AG04450 (cell line): ENCODE measurements at regions of chr17 and their contacts with region 1.

Region 1: GRCh38 chr17:63425482-63425881 is 20.6 kb downstream of the CYB561 start:
- DNase-seq: peak; percentile 68
- H3K4me3 ChIP-seq: no peak overlapping the region
- H3K27ac ChIP-seq: no peak overlapping the region
- H3K27me3 ChIP-seq: no peaks in the 10 kb centered on the region
- CTCF ChIP-seq: peak; percentile 98

Region 2: GRCh38 chr17:63478791-63479494 is 53.5 kb after region 1 on chr17:
- CTCF ChIA-PET with region 1: interaction called, 48 read pairs
- POLR2A ChIA-PET with region 1: no interaction called
- DNase-seq: peak; percentile 74
- H3K4me3 ChIP-seq: no peak overlapping the region
- H3K27ac ChIP-seq: no peak overlapping the region
- H3K27me3 ChIP-seq: peaks cover 10% of the 10 kb centered on the region
- CTCF ChIP-seq: peak; percentile 88

Region 3: GRCh38 chr17:63571763-63572271 is 146.3 kb after region 1 on chr17:
- CTCF ChIA-PET with region 1: interaction called, 16 read pairs
- POLR2A ChIA-PET with region 1: no interaction called
- DNase-seq: peak; percentile 44
- H3K4me3 ChIP-seq: no peak overlapping the region
- H3K27ac ChIP-seq: no peak overlapping the region
- H3K27me3 ChIP-seq: no peaks in the 10 kb centered on the region
- CTCF ChIP-seq: no peak

Region 4: GRCh38 chr17:63621766-63622519 is 196.5 kb after region 1 on chr17 and contains the start of gene MAP3K3:
- CTCF ChIA-PET with region 1: interaction called, 12 read pairs
- POLR2A ChIA-PET with region 1: no interaction called
- DNase-seq: peak; percentile 100
- H3K4me3 ChIP-seq: peak within 1 kb of the TSS; percentile 75
- H3K27ac ChIP-seq: peak within 1 kb of the TSS; percentile 65
- H3K27me3 ChIP-seq: no peaks in the 10 kb centered on the region
- CTCF ChIP-seq: peak; percentile 17; the same call in 1 of the 2 replicates
- polyA plus RNA-seq, gene MAP3K3: 14.9 and 15.3 TPM in 2 replicates

Region 5: DNA sequence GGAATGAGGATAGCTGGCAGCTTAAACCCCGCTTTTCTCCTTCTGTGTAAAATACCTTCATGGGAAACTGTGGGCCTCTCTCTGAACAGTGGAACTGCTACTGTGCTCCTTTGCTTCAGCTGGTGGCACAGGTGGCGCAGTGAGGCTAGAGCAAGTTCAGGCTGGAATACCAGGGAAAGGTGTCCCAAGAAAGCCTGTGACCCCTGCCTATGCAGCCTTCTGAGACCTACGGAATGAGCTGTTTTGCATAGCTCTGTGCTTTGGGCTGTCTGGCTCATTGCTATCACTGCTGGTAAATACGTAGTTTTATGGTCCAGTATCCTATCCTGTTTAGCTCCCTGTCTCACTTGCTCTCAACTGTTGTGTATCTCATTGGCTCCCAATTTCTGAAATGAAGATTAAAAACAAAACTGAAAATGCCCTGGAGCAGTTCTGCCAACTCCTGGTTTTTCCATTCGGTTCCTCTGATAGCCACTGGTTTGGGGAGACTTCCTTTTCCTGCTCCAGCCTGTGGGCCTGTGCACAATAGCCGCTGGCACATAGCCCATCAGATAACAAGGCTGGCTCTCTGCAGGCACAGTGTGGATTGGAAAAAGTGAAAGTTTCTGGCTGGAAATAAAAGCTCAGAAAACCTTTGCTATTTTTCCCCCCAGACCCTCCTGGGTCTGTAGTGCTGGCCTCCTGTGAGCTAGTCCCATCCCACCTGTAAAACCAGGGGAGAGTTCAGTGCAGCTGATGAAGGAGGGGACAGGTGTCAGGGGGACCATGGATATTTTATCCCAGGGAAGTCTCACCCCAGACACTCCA is 250.3 kb after region 1 on chr17:
- CTCF ChIA-PET with region 1: interaction called, 15 read pairs
- POLR2A ChIA-PET with region 1: no interaction called
- DNase-seq: peak; percentile 48
- H3K4me3 ChIP-seq: no peak overlapping the region
- H3K27ac ChIP-seq: no peak overlapping the region
- H3K27me3 ChIP-seq: no peaks in the 10 kb centered on the region
- CTCF ChIP-seq: no peak

Region 6: GRCh38 chr17:63718988-63719387 is 293.5 kb after region 1 on chr17:
- CTCF ChIA-PET with region 1: no interaction called
- POLR2A ChIA-PET with region 1: no interaction called
- DNase-seq: no peak
- H3K4me3 ChIP-seq: no peak overlapping the region
- H3K27ac ChIP-seq: no peak overlapping the region
- H3K27me3 ChIP-seq: no peaks in the 10 kb centered on the region
- CTCF ChIP-seq: no peak